ENCODE measurements at regions of chr12 and their contacts with region 1.

Region 1: GRCh38 chr12:1117970-1118563 is 127.0 kb downstream of the ERC1 start:
- DNase-seq: peak; percentile 40
- ATAC-seq: no peak
- H3K4me3 ChIP-seq: no peak overlapping the region
- H3K27ac ChIP-seq: no peak overlapping the region
- H3K4me1 ChIP-seq: no peaks in the 10 kb centered on the region
- H3K27me3 ChIP-seq: no peaks in the 10 kb centered on the region
- CTCF ChIP-seq: peak; percentile 86
- EP300 ChIP-seq: no peak
- POLR2A ChIP-seq: no peak
- RAD21 ChIP-seq: peak; percentile 87

Region 2: DNA sequence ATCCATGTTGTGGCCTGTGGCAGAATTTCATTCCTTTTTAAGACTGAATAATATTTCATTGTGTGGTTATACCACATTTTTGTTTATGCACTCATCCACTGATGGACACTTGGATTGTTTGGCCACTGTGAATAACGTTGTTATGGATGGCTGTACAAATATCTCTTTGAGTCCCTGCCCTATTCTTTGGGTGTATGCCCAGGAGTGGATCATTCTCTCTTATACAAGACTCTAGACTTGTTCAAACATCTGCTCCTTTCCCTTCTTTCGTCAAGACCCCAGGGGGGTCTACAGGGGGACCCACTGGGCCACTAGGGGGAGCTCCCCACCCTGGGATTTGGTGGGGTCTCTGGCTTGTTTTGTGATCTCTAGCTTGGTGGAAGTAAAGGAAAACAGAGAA is 398.9 kb after region 1 on chr12:
- CTCF ChIA-PET with region 1: no interaction called
- POLR2A ChIA-PET with region 1: no interaction called
- in situ Hi-C with region 1: no loop called
- intact Hi-C with region 1: loop called (anchors 5 kb)
- DNase-seq: peak; percentile 10
- ATAC-seq: peak; percentile 47; the same call in 1 of the 3 replicates
- H3K4me3 ChIP-seq: no peak overlapping the region
- H3K27ac ChIP-seq: no peak overlapping the region
- H3K4me1 ChIP-seq: peaks cover 24% of the 10 kb centered on the region
- H3K27me3 ChIP-seq: no peaks in the 10 kb centered on the region; a peak in 1 of 5 replicates
- CTCF ChIP-seq: peak; percentile 47
- EP300 ChIP-seq: no peak
- POLR2A ChIP-seq: no peak
- RAD21 ChIP-seq: no peak

Region 3: GRCh38 chr12:1576410-1577241 is 458.6 kb after region 1 on chr12:
- CTCF ChIA-PET with region 1: interaction called, 3 read pairs
- POLR2A ChIA-PET with region 1: no interaction called
- in situ Hi-C with region 1: loop called (anchors 5 kb)
- intact Hi-C with region 1: no loop called
- DNase-seq: no peak
- ATAC-seq: peak; percentile 35; the same call in 2 of the 3 replicates
- H3K4me3 ChIP-seq: no peak overlapping the region
- H3K27ac ChIP-seq: no peak overlapping the region
- H3K4me1 ChIP-seq: peaks cover 25% of the 10 kb centered on the region
- H3K27me3 ChIP-seq: peaks cover 12 to 40% of the 10 kb centered on the region in 2 experiments; a peak in 3 of 5 replicates
- CTCF ChIP-seq: no peak
- EP300 ChIP-seq: no peak
- POLR2A ChIP-seq: no peak
- RAD21 ChIP-seq: no peak

Region 4: GRCh38 chr12:1583421-1584078 is 465.5 kb after region 1 on chr12:
- CTCF ChIA-PET with region 1: interaction called, 32 read pairs
- POLR2A ChIA-PET with region 1: interaction called, 4 read pairs
- in situ Hi-C with region 1: loop called (anchors 5 kb)
- intact Hi-C with region 1: loop called (anchors 1 kb)
- DNase-seq: peak; percentile 72
- ATAC-seq: peak; percentile 69
- H3K4me3 ChIP-seq: no peak overlapping the region
- H3K27ac ChIP-seq: no peak overlapping the region
- H3K4me1 ChIP-seq: peaks cover 24% of the 10 kb centered on the region
- H3K27me3 ChIP-seq: peaks cover 7 to 18% of the 10 kb centered on the region in 2 experiments; a peak in 3 of 5 replicates
- CTCF ChIP-seq: peak; percentile 91
- EP300 ChIP-seq: no peak
- POLR2A ChIP-seq: no peak
- RAD21 ChIP-seq: peak; percentile 79